T-cell (primary cell): ENCODE measurements at regions of chr12 and their contacts with region 1.

Region 1: DNA sequence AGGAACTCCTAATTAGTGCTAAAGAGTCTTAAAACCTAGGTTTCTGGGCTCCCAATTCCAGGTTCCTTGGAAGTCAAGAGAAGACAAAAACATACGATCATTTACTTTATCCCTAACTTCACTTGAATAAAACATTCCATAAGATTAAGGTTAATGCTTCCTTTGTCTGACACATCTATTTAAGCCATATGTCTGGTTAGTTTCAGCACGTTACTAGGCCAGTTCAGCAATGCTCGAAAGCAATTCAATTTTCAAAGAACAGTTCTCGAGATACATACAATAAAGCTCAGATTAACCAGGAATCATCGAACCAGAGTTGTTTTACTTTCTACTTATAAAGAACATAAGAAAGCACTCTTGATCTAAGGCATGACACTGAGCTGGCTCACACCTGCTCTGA is 68.0 kb upstream of the POC1B start:
- DNase-seq: no peak
- ATAC-seq: no peak
- H3K4me3 ChIP-seq: no peak overlapping the region
- H3K4me3 Mint-ChIP-seq: no peak overlapping the region
- H3K27ac ChIP-seq: no peak overlapping the region
- H3K27ac Mint-ChIP-seq: no peak overlapping the region
- H3K4me1 ChIP-seq: no peaks in the 10 kb centered on the region
- H3K4me1 Mint-ChIP-seq: peaks cover 6 to 12% (median 11%) of the 10 kb centered on the region in 3 donors
- H3K27me3 ChIP-seq: no peaks in the 10 kb centered on the region
- H3K27me3 Mint-ChIP-seq: no peaks in the 10 kb centered on the region

Region 2: DNA sequence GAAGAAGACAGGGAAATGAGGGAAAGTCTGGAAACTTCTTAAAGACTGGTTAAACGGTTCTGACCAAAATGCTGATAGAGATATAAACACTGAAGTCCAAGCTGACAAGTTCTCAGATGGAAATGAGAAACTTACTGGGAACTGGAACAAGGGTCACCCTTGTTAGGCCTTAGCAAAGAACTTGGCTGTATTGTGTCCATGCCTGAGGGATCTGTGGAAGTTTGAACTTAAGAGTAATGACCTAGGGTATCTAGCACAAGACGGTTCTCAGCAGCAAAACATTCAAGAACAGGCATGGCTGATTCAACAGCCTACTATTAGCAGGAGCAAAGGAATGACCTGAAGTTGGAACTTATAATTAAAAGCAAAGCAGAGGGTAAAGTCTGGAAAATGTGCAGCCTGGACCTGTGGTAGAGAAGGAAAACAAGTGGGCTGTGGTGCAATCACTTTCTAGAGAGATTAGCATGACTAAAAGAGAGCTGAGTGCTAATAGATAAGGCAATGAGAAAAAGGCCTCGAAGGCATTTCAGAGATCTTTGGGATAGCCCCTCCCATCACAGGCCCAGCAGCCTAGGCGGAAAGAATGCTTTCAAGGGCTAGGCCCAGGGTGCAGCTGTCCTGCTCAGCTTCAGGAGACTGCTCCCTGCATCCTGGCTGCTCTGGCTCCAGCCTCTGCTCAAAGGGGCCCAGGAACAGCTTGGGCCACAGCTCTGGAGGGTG is 54.5 kb after region 1 on chr12:
- CTCF ChIA-PET with region 1: no interaction called
- POLR2A ChIA-PET with region 1: interaction called in 1 of 2 experiments, 10 read pairs
- DNase-seq: no peak
- ATAC-seq: no peak
- H3K4me3 ChIP-seq: no peak overlapping the region
- H3K4me3 Mint-ChIP-seq: no peak overlapping the region
- H3K27ac ChIP-seq: no peak overlapping the region
- H3K27ac Mint-ChIP-seq: peak overlapping the region in 1 of 2 donors; percentile 20
- H3K4me1 ChIP-seq: peaks cover 0 to 7% of the 10 kb centered on the region in 2 experiments
- H3K4me1 Mint-ChIP-seq: peaks cover 56 to 61% (median 57%) of the 10 kb centered on the region in 3 donors
- H3K27me3 ChIP-seq: no peaks in the 10 kb centered on the region
- H3K27me3 Mint-ChIP-seq: no peaks in the 10 kb centered on the region